CD4-positive, alpha-beta T cell (primary cell): ENCODE measurements at regions of chr12 and their contacts with region 1.

Region 1: GRCh38 chr12:132887513-132888351 is at the start of gene CHFR:
- DNase-seq: peak; percentile 87 to 98 (median 92)
- ATAC-seq: peak; percentile 97
- H3K4me3 ChIP-seq: peak within 1 kb of the TSS; percentile 77
- H3K4me3 Mint-ChIP-seq: peak within 1 kb of the TSS; percentile 97
- H3K27ac ChIP-seq: peak within 1 kb of the TSS; percentile 97
- H3K27ac Mint-ChIP-seq: peak within 1 kb of the TSS; percentile 100
- H3K4me1 ChIP-seq: peaks cover 22% of the 10 kb centered on the region
- H3K4me1 Mint-ChIP-seq: peaks cover 34% of the 10 kb centered on the region
- H3K27me3 ChIP-seq: no peaks in the 10 kb centered on the region
- H3K27me3 Mint-ChIP-seq: no peaks in the 10 kb centered on the region
- CTCF ChIP-seq: no peak
- total RNA-seq, gene CHFR: 75.1 to 85.6 TPM

Region 2: DNA sequence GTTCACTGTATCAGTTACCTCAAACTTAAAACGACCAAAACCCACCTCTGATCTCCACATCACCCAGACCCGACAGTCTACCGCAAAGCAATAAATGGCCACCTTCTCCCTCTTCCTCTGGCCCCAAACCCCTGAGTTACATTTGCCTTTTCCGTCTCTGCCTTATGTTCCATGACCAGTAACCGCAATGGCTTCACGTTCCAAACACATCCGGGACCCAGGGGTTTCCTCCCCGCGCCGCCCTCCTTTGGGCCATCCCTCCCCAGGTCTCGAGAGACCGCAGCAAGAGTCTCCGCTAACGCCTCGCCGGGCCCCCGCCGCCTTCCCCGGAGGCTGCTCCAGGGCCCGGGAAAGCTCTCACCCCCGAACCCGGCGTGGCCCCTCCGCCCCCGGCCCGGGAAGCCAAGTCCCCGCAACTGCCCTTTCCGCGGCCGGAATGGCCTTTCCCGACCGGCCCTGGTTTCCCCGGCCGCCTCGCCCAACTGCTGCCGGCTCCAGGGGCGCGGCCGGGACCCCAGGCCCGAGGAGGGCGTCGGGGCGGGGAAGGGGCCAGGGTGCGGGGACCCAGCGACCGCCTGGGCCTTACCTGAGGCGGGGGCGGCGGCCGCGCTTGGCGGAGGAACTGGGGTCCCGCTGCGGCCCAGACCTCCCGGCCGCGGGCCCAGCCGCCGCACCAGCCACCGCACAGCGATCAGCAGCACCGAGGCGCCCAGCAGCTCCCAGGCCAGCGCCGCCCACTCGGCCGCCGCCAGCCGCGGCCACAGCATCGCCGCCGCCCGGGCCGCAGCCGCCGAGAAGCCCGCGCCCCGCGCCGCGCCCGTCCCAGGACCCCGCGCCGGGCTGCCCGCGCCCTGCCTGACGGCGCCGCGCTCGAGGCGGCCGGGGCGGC is 126.5 kb before region 1 on chr12 and contains the start of gene ANKLE2:
- CTCF ChIA-PET with region 1: no interaction called
- POLR2A ChIA-PET with region 1: interaction called, 3 read pairs
- intact Hi-C with region 1: loop called in 1 of 2 experiments (anchors 5 kb)
- DNase-seq: peak; percentile 31 to 78 (median 56)
- ATAC-seq: peak; percentile 56
- H3K4me3 ChIP-seq: peak within 1 kb of the TSS; percentile 82
- H3K4me3 Mint-ChIP-seq: peak within 1 kb of the TSS; percentile 93
- H3K27ac ChIP-seq: peak within 1 kb of the TSS; percentile 84 to 86
- H3K27ac Mint-ChIP-seq: peak within 1 kb of the TSS; percentile 95
- H3K4me1 ChIP-seq: peaks cover 39% of the 10 kb centered on the region
- H3K4me1 Mint-ChIP-seq: peaks cover 36% of the 10 kb centered on the region
- H3K27me3 ChIP-seq: no peaks in the 10 kb centered on the region
- H3K27me3 Mint-ChIP-seq: no peaks in the 10 kb centered on the region
- CTCF ChIP-seq: no peak
- total RNA-seq, gene ANKLE2: 61.7 to 65.7 TPM

Region 3: GRCh38 chr12:132828706-132829534 is 58.8 kb before region 1 on chr12 and contains the start of gene GOLGA3:
- CTCF ChIA-PET with region 1: no interaction called
- POLR2A ChIA-PET with region 1: interaction called, 30 read pairs
- intact Hi-C with region 1: loop called in 1 of 2 experiments (anchors 1 kb)
- DNase-seq: peak; percentile 91 to 98 (median 95)
- ATAC-seq: peak; percentile 91
- H3K4me3 ChIP-seq: peak within 1 kb of the TSS; percentile 90
- H3K4me3 Mint-ChIP-seq: peak within 1 kb of the TSS; percentile 99
- H3K27ac ChIP-seq: peak within 1 kb of the TSS; percentile 94 to 100
- H3K27ac Mint-ChIP-seq: peak within 1 kb of the TSS; percentile 100
- H3K4me1 ChIP-seq: peaks cover 37% of the 10 kb centered on the region
- H3K4me1 Mint-ChIP-seq: peaks cover 58% of the 10 kb centered on the region
- H3K27me3 ChIP-seq: no peaks in the 10 kb centered on the region
- H3K27me3 Mint-ChIP-seq: no peaks in the 10 kb centered on the region
- CTCF ChIP-seq: no peak
- total RNA-seq, gene GOLGA3: 31.5 to 34.0 TPM

Region 4: GRCh38 chr12:132866251-132866828 is 21.4 kb before region 1 on chr12:
- CTCF ChIA-PET with region 1: no interaction called
- POLR2A ChIA-PET with region 1: interaction called, 10 read pairs
- intact Hi-C with region 1: no loop called
- DNase-seq: no peak
- ATAC-seq: no peak
- H3K4me3 ChIP-seq: no peak overlapping the region
- H3K4me3 Mint-ChIP-seq: no peak overlapping the region
- H3K27ac ChIP-seq: no peak overlapping the region
- H3K27ac Mint-ChIP-seq: peak overlapping the region; percentile 89
- H3K4me1 ChIP-seq: peaks cover 12% of the 10 kb centered on the region
- H3K4me1 Mint-ChIP-seq: peaks cover 32% of the 10 kb centered on the region
- H3K27me3 ChIP-seq: no peaks in the 10 kb centered on the region
- H3K27me3 Mint-ChIP-seq: no peaks in the 10 kb centered on the region
- CTCF ChIP-seq: no peak

Region 5: GRCh38 chr12:133264173-133264572 is 376.4 kb after region 1 on chr12:
- CTCF ChIA-PET with region 1: no interaction called
- POLR2A ChIA-PET with region 1: no interaction called
- intact Hi-C with region 1: no loop called
- DNase-seq: no peak
- ATAC-seq: no peak
- H3K4me3 ChIP-seq: no peak overlapping the region
- H3K4me3 Mint-ChIP-seq: no peak overlapping the region
- H3K27ac ChIP-seq: no peak overlapping the region
- H3K27ac Mint-ChIP-seq: no peak overlapping the region
- H3K4me1 ChIP-seq: no peaks in the 10 kb centered on the region
- H3K4me1 Mint-ChIP-seq: no peaks in the 10 kb centered on the region
- H3K27me3 ChIP-seq: no peaks in the 10 kb centered on the region
- H3K27me3 Mint-ChIP-seq: no peaks in the 10 kb centered on the region
- CTCF ChIP-seq: no peak